Activated CD4-positive, alpha-beta memory T cell treated with anti-CD3 and anti-CD28 coated beads for 36 hours (primary cell): ENCODE measurements at regions of chr16 and their contacts with region 1.

Region 1: DNA sequence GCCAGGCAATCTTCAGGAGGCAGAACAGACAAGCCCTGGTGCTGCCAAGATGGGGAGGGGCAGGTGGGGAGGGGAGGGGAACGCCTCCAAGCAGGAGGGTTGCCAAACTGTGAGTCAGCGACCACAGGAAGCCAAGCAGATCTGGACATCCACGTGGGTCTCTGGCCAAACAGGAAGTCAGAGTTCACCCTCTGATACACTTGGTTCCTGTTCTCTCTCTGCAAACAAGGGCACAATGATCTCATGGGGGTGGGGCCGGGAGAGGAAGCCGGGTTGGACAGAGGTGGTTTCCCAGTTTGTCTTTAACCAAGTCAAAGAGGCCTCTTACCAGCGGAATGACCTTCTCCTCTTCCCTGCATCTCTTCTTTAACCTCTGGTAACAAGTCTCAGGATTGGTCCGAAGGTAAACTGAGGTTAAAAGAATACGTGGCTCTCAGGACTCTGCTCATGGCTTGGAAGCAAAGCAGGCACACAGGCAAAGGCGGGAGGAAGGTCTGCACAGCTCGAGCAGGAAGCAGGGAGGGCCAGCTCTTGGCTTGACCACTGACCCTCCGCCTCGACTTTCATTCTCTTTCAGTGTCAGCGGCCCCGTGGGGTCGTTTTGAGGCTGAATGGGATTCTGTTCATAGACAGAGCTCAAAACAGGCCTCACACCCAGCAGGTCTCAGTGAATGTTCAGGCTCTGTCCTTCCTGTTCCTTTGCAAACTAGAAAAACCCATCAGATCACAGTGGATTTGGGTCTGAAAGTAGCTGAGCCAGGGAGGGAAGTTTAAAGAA is 32.9 kb downstream of the TK2 start:
- DNase-seq: peak; percentile 95
- H3K4me3 Mint-ChIP-seq: peak overlapping the region; percentile 87
- H3K27ac Mint-ChIP-seq: peak overlapping the region; percentile 99
- H3K4me1 Mint-ChIP-seq: peaks cover 71% of the 10 kb centered on the region
- H3K27me3 Mint-ChIP-seq: no peaks in the 10 kb centered on the region

Region 2: DNA sequence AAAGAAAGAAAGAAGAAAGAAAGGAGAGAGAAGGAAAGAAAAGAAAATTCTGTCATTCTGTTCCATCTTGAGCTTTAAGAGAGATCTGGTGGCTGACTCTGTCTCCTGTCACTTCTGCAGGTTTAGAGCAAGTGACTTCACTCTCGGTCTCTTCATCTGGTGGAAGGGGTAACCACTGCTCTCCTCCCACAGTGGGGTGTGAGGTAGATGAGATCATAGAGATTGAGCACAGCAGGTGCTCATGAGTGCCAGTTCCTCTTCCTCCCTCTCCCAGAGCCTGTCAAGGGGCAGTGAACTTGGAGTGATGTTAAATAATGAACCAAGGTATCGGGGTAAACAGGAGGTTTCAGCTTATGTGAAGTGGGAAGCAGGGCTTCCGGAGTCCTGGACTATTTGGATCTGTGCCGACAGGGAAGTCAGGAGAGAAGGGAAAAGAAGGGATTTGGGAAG is 42.2 kb before region 1 on chr16:
- CTCF ChIA-PET with region 1: interaction called, 11 read pairs
- POLR2A ChIA-PET with region 1: interaction called, 4 read pairs
- intact Hi-C with region 1: loop called (anchors 1 kb)
- DNase-seq: peak; percentile 77
- H3K4me3 Mint-ChIP-seq: no peak overlapping the region
- H3K27ac Mint-ChIP-seq: peak overlapping the region; percentile 63
- H3K4me1 Mint-ChIP-seq: peaks cover 22% of the 10 kb centered on the region
- H3K27me3 Mint-ChIP-seq: no peaks in the 10 kb centered on the region

Region 3: DNA sequence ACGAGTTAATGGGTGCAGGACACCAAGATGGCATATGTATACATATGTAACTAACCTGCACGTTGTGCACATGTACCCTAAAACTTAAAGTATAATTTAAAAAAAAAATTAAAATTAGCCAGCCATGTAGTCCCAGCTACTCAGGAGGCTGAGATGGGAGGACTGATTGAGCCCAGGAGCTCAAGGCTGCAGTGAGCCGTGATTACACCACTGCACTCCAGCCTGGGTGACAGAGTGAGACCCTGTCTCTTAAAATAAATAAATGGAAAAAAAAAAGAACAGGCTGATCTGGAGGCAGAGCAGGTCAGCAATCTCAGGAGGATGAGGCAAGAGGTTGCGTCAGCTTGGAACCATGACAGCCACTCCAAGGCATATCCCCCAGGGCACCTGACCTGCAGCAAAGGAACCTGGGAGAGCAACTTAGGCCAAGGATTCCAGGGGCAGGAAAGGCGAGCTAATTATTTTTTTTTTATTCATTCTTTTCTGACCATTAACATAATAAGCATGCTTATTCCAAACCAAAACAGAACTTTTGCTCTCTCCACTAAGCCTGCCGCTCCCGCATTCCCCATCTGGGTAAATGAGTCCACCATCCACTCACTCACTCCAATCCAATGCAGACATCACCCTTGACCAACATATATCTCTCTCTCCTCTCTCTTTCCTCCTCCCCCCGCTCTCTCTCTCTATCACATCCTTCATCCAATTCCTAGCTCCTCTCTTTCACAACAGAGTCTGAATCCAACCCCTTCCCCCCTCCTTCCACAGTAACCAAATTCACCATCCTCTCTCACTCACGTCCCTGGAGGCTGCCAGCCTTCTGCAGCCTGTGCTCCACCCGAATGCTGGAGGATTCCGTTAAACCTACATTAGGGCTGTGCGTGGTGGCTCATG is 14.7 kb before region 1 on chr16:
- CTCF ChIA-PET with region 1: no interaction called
- POLR2A ChIA-PET with region 1: no interaction called
- intact Hi-C with region 1: no loop called
- DNase-seq: peak; percentile 1
- H3K4me3 Mint-ChIP-seq: no peak overlapping the region
- H3K27ac Mint-ChIP-seq: no peak overlapping the region
- H3K4me1 Mint-ChIP-seq: no peaks in the 10 kb centered on the region
- H3K27me3 Mint-ChIP-seq: no peaks in the 10 kb centered on the region

Region 4: DNA sequence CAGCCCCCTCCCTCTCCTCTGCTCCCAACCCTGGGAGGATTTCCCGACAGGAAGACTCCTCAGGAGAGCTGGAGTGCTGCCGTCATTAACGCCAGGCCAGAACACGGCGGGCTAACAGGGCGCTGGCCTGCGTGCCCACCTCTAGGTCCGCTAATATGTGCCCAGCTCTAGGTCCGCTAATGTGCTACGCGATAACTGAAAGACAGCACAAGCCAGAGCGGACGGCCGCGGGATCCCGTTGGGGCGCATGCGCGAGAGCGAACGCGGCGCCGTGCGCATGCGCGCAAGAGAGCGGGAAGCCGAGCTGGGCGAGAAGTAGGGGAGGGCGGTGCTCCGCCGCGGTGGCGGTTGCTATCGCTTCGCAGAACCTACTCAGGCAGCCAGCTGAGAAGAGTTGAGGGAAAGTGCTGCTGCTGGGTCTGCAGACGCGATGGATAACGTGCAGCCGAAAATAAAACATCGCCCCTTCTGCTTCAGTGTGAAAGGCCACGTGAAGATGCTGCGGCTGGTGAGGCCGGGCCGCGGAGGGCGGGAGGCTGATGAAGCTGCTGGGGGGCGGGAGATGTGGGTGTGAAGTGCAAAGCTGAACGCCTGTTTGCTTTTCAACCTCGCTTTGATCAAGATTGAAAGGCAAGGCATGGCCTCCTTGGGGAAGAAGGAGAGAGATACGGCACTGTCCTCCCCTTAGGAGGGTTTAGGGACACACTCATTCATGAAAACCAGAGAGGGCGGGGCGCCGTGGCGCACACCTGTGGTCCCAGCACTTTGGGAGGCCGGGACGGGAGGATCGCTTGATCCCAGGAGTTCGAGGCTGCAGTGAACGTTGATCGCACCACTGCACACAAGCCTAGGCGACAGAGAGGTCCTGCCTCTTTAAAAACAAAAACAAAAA is 35.5 kb after region 1 on chr16 and contains the start of gene CKLF:
- CTCF ChIA-PET with region 1: interaction called, 34 read pairs
- POLR2A ChIA-PET with region 1: interaction called, 26 read pairs
- intact Hi-C with region 1: loop called (anchors 1 kb)
- DNase-seq: peak; percentile 95
- H3K4me3 Mint-ChIP-seq: peak within 1 kb of the TSS; percentile 95
- H3K27ac Mint-ChIP-seq: peak within 1 kb of the TSS; percentile 96
- H3K4me1 Mint-ChIP-seq: peaks cover 65% of the 10 kb centered on the region
- H3K27me3 Mint-ChIP-seq: peaks cover 2% of the 10 kb centered on the region
- total RNA-seq, gene CKLF: 167 to 173 TPM

Region 5: GRCh38 chr16:66562407-66562806 is 45.4 kb after region 1 on chr16:
- CTCF ChIA-PET with region 1: interaction called, 35 read pairs
- POLR2A ChIA-PET with region 1: interaction called, 27 read pairs
- intact Hi-C with region 1: loop called (anchors 1 kb)
- DNase-seq: no peak
- H3K4me3 Mint-ChIP-seq: no peak overlapping the region
- H3K27ac Mint-ChIP-seq: no peak overlapping the region
- H3K4me1 Mint-ChIP-seq: peaks cover 71% of the 10 kb centered on the region
- H3K27me3 Mint-ChIP-seq: no peaks in the 10 kb centered on the region